ENCODE measurements at regions of chr10 and their contacts with region 1.

Region 1: DNA sequence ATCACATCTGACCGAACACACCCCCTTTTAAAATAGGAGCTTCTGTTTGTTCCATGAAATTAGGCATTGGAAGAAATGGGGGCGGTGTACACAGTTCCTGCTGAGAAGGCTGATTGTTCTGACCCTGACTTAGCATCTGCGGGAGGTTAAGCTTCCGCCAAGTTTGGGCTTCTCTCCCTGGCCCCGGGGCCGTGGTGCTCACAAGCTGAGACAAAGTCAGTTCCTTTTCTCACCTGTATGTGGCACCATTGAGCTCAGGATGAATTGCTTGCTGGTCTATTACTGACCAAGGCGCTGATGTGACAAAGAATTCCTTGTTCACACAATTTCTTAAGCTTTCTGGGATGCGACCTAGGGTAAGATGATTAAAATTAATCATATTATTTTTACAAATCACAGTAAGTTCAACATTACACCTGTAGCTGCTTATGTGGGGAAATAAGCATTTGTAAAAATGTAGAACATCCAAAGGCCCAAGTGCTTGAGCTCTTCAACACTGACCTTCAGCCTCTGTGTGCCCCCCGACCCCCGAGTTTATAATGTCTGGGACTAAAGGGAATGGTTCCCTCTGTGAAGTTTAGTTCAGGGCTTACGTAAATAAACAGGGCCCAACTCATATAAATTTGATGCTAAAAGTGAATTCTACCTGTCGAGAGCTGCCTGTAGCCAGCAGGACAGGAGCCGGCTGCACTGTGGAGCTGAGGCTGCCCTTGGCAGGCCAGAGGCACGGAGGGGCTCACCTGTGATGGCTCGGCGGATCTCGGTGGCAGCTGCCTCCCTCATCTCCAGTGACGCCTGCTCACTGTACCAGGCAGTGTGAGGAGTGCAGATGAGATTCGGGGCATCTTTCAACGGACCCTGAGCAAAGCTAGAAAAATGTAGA is 50.8 kb downstream of the ZRANB1 start:
- DNase-seq: no peak
- H3K4me3 ChIP-seq: no peak overlapping the region
- CTCF ChIP-seq: peak; percentile 47

Region 2: GRCh38 chr10:124911124-124912067 is 81.3 kb before region 1 on chr10:
- CTCF ChIA-PET with region 1: no interaction called
- POLR2A ChIA-PET with region 1: no interaction called
- DNase-seq: peak; percentile 31
- H3K4me3 ChIP-seq: peak overlapping the region; percentile 7; the same call in 1 of the 2 replicates
- CTCF ChIP-seq: no peak

Region 3: GRCh38 chr10:124971276-124971675 is 21.4 kb before region 1 on chr10:
- CTCF ChIA-PET with region 1: interaction called, 14 read pairs
- POLR2A ChIA-PET with region 1: no interaction called
- DNase-seq: no peak
- H3K4me3 ChIP-seq: no peak overlapping the region
- CTCF ChIP-seq: no peak

Region 4: DNA sequence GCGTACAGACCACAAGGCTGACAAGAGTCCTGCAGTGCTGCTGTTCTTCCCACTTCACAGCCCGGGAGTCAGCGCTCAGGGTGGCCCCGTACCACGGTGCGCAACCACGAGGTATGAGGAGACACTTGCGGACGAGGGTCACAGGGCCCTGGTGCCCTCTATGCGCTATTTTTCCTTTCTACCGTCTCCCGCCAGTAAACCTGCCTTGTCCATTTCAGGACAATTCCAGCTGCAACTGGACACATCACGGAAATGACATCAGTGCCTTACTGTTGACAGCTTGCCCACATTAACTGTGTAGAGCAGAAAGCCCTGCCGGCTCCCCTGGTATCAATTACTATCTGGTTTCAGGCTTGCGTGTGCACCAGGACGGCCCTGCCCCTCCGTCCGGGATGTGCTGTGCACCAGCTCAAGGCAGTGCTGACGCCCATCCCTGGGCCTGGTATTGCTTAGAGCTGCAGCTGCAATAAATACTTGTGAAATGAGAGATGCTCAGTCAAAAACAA is 14.3 kb after region 1 on chr10:
- CTCF ChIA-PET with region 1: interaction called, 19 read pairs
- POLR2A ChIA-PET with region 1: no interaction called
- DNase-seq: peak; percentile 36
- H3K4me3 ChIP-seq: no peak overlapping the region
- CTCF ChIP-seq: no peak